Endothelial cell of umbilical vein (primary cell): ENCODE measurements at regions of chr2 and their contacts with region 1.

Region 1: GRCh38 chr2:173965329-173966025 is at the start of gene SP3:
- DNase-seq: peak; percentile 98
- H3K4me3 ChIP-seq: peak within 1 kb of the TSS; percentile 87 to 92 (median 91)
- H3K27ac ChIP-seq: peak within 1 kb of the TSS; percentile 90
- H3K4me1 ChIP-seq: peaks cover 19% of the 10 kb centered on the region
- H3K27me3 ChIP-seq: no peaks in the 10 kb centered on the region
- CTCF ChIP-seq: no peak
- POLR2A ChIP-seq: peak; percentile 90
- total RNA-seq, gene SP3: 59.0 and 60.1 TPM in 2 replicates

Region 2: DNA sequence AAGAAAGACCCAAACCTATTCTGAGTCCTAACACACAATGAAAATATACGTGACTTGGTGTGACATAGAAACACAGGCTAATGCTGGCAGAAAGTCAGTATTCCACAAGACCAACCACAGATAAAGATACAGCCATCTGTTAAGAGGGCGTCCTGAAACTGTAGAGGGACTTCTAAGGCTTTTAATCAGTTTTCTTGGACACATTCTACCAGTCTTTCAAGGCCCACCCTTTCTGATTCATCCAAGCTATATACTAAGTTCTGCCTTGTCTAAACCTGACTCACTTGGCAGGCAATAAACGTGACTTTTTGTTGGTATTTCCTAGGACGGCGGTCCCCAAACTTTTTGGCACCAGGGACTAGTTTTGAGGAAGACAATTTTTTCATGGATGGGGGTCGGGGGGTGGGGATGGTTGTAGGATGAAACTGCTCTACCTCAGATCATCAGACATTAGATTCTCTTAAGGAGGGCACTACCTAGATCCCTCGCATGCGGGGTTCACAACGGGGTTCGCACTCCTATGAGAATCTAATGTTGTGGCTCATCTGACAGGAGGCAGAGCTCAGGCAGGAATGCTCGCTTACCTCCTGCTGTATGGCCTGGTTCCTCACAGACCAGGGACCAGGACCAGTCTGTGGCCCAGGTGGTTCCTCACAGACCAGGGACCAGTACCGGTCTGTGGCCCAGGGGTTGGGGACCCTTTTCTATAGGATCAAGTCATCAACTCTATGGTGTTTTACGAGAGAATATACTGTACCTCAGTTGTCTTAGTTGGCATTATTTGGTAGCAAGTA is 61.7 kb before region 1 on chr2:
- CTCF ChIA-PET with region 1: no interaction called
- POLR2A ChIA-PET with region 1: no interaction called
- dilution Hi-C with region 1: no loop called
- intact Hi-C with region 1: loop called (anchors 5 kb)
- DNase-seq: no peak
- H3K4me3 ChIP-seq: no peak overlapping the region
- H3K27ac ChIP-seq: no peak overlapping the region
- H3K4me1 ChIP-seq: no peaks in the 10 kb centered on the region
- H3K27me3 ChIP-seq: no peaks in the 10 kb centered on the region
- CTCF ChIP-seq: no peak
- POLR2A ChIP-seq: no peak

Region 3: GRCh38 chr2:173947131-173947530 is 18.3 kb before region 1 on chr2:
- CTCF ChIA-PET with region 1: interaction called, 3 read pairs
- POLR2A ChIA-PET with region 1: no interaction called
- dilution Hi-C with region 1: no loop called
- intact Hi-C with region 1: loop called (anchors 2 kb)
- DNase-seq: no peak
- H3K4me3 ChIP-seq: no peak overlapping the region
- H3K27ac ChIP-seq: no peak overlapping the region
- H3K4me1 ChIP-seq: peaks cover 12% of the 10 kb centered on the region
- H3K27me3 ChIP-seq: no peaks in the 10 kb centered on the region
- CTCF ChIP-seq: no peak
- POLR2A ChIP-seq: no peak

Region 4: DNA sequence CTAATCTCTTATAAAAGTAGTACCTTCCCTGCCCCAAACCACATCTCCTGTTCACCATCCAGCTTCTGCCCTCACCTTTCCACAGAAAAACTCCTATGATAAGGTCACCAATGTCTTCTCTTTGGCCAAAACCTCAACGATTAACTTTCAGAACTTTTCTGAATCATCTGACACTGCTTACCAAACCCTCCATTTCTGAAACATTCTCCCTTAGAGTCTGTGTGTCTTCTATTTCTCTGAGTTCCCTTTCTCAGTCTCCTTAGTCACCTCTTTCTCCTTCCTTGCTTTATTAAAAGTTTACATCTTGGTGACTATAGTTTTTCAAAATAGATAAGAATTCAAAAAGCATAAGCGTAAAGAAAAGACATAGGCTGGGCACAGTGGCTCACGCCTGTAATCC is 51.0 kb after region 1 on chr2:
- CTCF ChIA-PET with region 1: no interaction called
- POLR2A ChIA-PET with region 1: no interaction called
- dilution Hi-C with region 1: no loop called
- intact Hi-C with region 1: no loop called
- DNase-seq: no peak
- H3K4me3 ChIP-seq: no peak overlapping the region
- H3K27ac ChIP-seq: no peak overlapping the region
- H3K4me1 ChIP-seq: peaks cover 10% of the 10 kb centered on the region
- H3K27me3 ChIP-seq: peaks cover 0 to 2% of the 10 kb centered on the region in 2 experiments
- CTCF ChIP-seq: no peak
- POLR2A ChIP-seq: no peak

Region 5: GRCh38 chr2:174039551-174040416 is 74.3 kb after region 1 on chr2:
- CTCF ChIA-PET with region 1: interaction called, 4 read pairs
- POLR2A ChIA-PET with region 1: interaction called, 5 read pairs
- dilution Hi-C with region 1: no loop called
- intact Hi-C with region 1: loop called (anchors 1 kb)
- DNase-seq: peak; percentile 97
- H3K4me3 ChIP-seq: no peak overlapping the region
- H3K27ac ChIP-seq: peak overlapping the region; percentile 67
- H3K4me1 ChIP-seq: peaks cover 16% of the 10 kb centered on the region
- H3K27me3 ChIP-seq: no peaks in the 10 kb centered on the region
- CTCF ChIP-seq: peak; percentile 86 to 93
- POLR2A ChIP-seq: no peak

Region 6: GRCh38 chr2:174120346-174120745 is 154.9 kb after region 1 on chr2:
- CTCF ChIA-PET with region 1: no interaction called
- POLR2A ChIA-PET with region 1: no interaction called
- dilution Hi-C with region 1: no loop called
- intact Hi-C with region 1: loop called (anchors 1 kb)
- DNase-seq: peak; percentile 73
- H3K4me3 ChIP-seq: no peak overlapping the region
- H3K27ac ChIP-seq: no peak overlapping the region
- H3K4me1 ChIP-seq: peaks cover 48% of the 10 kb centered on the region
- H3K27me3 ChIP-seq: no peaks in the 10 kb centered on the region
- CTCF ChIP-seq: no peak
- POLR2A ChIP-seq: no peak